ENCODE measurements at regions of chr12 and their contacts with region 1.

Region 1: GRCh38 chr12:104930388-104931326 is 27.4 kb downstream of the SLC41A2 start:
- DNase-seq: no peak
- ATAC-seq: peak; percentile 85
- H3K4me3 Mint-ChIP-seq: peak overlapping the region; percentile 39
- H3K27ac Mint-ChIP-seq: peak overlapping the region; percentile 65
- H3K4me1 Mint-ChIP-seq: peaks cover 28% of the 10 kb centered on the region
- H3K27me3 Mint-ChIP-seq: no peaks in the 10 kb centered on the region
- CTCF ChIP-seq: no peak

Region 2: GRCh38 chr12:104890476-104891096 is 40.1 kb before region 1 on chr12:
- CTCF ChIA-PET with region 1: no interaction called
- POLR2A ChIA-PET with region 1: no interaction called
- intact Hi-C with region 1: loop called (anchors 5 kb)
- DNase-seq: no peak
- ATAC-seq: peak; percentile 56
- H3K4me3 Mint-ChIP-seq: no peak overlapping the region
- H3K27ac Mint-ChIP-seq: no peak overlapping the region
- H3K4me1 Mint-ChIP-seq: peaks cover 11% of the 10 kb centered on the region
- H3K27me3 Mint-ChIP-seq: no peaks in the 10 kb centered on the region
- CTCF ChIP-seq: no peak

Region 3: DNA sequence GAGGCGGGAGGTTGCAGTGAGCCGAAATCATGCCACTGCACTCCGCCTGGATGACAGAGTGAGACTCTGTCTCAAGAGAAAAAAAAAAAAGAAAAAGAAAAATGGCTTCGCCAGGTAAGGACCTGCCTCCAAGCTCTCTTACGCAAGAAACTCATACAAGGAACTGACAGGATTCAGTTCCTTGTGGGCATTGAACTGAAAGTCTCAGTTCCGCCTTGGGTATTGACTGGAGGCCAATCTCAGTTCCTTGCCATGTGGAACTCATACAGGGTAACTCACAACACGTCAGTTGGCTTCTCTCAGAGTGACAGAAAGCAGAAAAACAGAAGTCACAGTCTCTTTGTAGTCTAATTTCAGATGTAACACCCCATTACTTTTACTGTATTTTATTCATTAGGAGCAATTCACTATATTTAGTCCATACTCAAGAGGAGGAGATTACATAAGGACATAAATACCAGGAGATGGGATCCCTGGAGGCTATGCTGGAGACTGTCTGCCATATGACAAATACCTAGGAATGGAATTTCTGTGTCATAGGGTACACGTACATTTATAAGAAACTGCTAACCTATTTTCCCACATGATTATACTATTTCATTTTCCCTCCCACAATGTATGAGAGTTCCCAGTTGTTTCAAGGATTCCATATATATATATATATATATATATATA is 44.1 kb after region 1 on chr12:
- CTCF ChIA-PET with region 1: interaction called, 4 read pairs
- POLR2A ChIA-PET with region 1: interaction called, 8 read pairs
- intact Hi-C with region 1: loop called (anchors 1 kb)
- DNase-seq: peak; percentile 35
- ATAC-seq: peak; percentile 98
- H3K4me3 Mint-ChIP-seq: peak overlapping the region; percentile 17
- H3K27ac Mint-ChIP-seq: peak overlapping the region; percentile 72
- H3K4me1 Mint-ChIP-seq: peaks cover 40% of the 10 kb centered on the region
- H3K27me3 Mint-ChIP-seq: no peaks in the 10 kb centered on the region
- CTCF ChIP-seq: no peak

Measured in activated B cell treated with CpG ODN at 0.5 μM for 24 hours (primary cell).